Dorsolateral prefrontal cortex (tissue), 120 donors: ENCODE measurements at regions of chr4 and their contacts with region 1.

Region 1: DNA sequence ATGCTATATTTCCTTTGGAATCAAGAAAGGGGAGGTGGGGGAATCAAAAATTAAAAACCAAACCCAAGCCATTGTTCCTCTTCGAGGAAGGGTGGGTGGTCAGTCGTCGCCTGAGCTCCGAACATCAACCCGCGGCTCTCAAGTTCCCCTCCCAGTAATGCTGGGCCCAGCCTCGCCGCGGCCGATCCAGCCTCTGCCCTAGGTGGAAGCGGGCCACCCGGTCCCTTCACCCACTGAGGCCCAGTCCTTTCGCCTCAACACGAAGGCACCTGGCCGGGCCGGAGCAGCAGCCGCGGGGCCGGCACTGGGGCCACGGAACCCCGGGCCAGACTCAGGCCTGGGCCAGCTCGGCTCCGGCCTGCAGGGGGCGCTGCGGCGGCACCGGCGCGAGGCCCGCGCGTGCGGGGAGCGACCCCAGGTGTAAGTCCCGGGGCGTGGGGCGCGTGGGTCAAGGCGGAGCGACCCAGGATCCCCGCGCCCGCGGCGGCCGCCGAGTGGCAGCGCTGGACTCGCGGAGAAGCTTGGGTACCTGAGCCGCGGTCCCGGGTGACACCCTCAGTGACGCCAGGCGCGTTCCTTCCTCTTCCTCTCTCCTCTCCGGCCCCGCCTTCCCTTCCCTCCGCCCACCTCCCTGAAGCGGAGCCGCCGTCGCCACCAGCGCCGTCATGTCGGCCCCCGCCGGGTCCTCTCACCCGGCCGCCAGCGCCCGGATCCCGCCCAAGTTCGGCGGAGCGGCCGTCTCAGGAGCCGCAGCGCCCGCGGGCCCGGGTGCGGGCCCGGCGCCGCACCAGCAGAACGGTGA is at the start of gene SEC24B:
- DNase-seq: peak; percentile 63 to 92 (median 84)
- H3K4me3 ChIP-seq: peak within 1 kb of the TSS; percentile 62 to 97 (median 81)
- H3K27ac ChIP-seq: peak within 1 kb of the TSS; percentile 64 to 97 (median 90)
- H3K27me3 ChIP-seq: no peaks in the 10 kb centered on the region
- CTCF ChIP-seq: peak; percentile 43 to 98 (median 86)
- total RNA-seq, gene SEC24B: 24.1 to 47.5 (median 33.2) TPM

Region 2: DNA sequence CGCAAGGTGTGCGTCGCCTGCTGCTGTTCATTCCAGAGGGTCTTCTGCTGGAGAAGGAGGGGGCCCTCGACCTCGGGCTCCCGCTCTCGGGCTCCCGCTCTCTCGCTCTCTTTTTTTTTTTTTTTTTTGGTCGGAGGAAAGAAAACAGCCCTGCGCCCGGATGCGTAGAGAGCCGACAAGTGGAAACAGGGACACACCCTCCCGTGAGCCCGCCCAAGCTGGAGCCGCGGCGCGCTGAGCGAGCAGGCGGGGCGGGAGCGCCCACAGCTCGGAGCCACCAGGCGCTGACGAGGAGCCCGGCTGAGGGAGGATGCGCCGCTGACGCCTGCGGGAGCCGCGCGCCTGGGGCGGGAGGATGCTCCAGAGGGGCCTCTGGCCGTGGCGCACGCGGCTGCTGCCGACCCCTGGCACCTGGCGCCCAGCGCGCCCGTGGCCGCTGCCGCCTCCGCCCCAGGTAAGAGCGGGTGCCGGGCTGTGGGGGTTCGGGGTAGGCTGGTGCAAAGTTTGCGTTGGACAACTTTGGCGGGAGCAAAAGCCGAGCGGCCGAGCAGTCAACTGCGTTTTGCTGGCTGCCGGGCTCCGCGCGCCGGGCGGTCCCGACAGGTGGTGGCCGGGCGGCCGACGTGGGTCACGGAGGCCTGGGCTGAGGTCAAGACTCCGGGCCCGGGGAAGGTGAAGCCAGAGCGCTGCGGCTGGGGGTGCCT is 126.7 kb after region 1 on chr4 and contains the start of gene MCUB:
- intact Hi-C with region 1: loop called (anchors 2 to 10 kb)
- DNase-seq: peak; percentile 30 to 86 (median 64)
- H3K4me3 ChIP-seq: peak within 1 kb of the TSS; percentile 53 to 89 (median 77)
- H3K27ac ChIP-seq: peak within 1 kb of the TSS in 34 of 59 donors; percentile 12 to 79 (median 44)
- H3K27me3 ChIP-seq: no peaks in the 10 kb centered on the region
- CTCF ChIP-seq: peak in 4 of 56 donors; percentile 4 to 17 (median 8)
- total RNA-seq, gene MCUB: 1.3 to 14.3 (median 4.8) TPM

Region 3: GRCh38 chr4:109665783-109666485 is 232.5 kb after region 1 on chr4:
- intact Hi-C with region 1: loop called in 1 of 2 experiments (anchors 10 kb)
- DNase-seq: no peak
- H3K4me3 ChIP-seq: no peak overlapping the region
- H3K27ac ChIP-seq: no peak overlapping the region
- H3K27me3 ChIP-seq: no peaks in the 10 kb centered on the region
- CTCF ChIP-seq: no peak

Region 4: GRCh38 chr4:109729718-109730618 is 296.6 kb after region 1 on chr4 and contains the start of gene PLA2G12A:
- intact Hi-C with region 1: loop called in 1 of 2 experiments (anchors 10 kb)
- DNase-seq: peak; percentile 39 to 80 (median 56)
- H3K4me3 ChIP-seq: peak within 1 kb of the TSS; percentile 54 to 99 (median 91)
- H3K27ac ChIP-seq: peak within 1 kb of the TSS in 52 of 59 donors; percentile 5 to 88 (median 72)
- H3K27me3 ChIP-seq: no peaks in the 10 kb centered on the region
- CTCF ChIP-seq: peak in 3 of 56 donors; percentile 5 to 17 (median 5)
- total RNA-seq, gene PLA2G12A: 30.2 to 64.0 (median 40.2) TPM

Region 5: DNA sequence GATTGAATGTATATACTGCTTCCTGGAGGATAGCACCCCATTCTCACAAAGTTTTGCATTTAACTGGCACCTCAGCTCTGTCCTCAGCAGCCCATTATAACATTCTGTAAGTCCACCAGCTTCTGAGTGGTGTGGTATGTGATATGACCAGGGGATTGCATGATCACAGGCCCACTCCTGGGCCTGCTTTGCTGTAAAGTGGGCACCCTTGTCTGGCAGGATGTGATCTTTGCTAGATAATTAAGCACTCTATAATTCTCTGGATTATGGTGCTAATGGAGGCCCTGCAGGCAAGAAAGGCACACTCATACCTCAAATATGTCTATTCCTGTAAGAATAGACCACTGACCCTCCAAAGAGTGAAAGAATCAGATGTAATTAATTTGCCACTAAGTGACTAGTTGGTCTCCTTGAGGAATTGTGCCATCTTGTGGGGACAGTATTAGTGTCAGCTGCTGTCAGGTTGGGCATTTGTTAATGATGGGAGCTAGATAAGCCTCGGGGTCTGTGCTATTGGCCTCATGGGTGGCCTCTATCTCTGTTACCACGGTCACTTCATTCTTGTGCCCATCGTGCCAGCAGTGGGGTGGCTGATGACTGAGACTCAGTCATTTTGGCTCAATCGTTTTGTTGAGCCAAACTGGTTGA is 370.6 kb after region 1 on chr4:
- intact Hi-C with region 1: loop called in 1 of 2 experiments (anchors 5 kb)
- DNase-seq: peak in 1 of 10 donors; percentile 17
- H3K4me3 ChIP-seq: no peak overlapping the region
- H3K27ac ChIP-seq: no peak overlapping the region
- H3K27me3 ChIP-seq: peaks cover 0 to 4% (median 0%) of the 10 kb centered on the region in 45 donors
- CTCF ChIP-seq: peak in 50 of 56 donors; percentile 16 to 65 (median 39)

Region 6: DNA sequence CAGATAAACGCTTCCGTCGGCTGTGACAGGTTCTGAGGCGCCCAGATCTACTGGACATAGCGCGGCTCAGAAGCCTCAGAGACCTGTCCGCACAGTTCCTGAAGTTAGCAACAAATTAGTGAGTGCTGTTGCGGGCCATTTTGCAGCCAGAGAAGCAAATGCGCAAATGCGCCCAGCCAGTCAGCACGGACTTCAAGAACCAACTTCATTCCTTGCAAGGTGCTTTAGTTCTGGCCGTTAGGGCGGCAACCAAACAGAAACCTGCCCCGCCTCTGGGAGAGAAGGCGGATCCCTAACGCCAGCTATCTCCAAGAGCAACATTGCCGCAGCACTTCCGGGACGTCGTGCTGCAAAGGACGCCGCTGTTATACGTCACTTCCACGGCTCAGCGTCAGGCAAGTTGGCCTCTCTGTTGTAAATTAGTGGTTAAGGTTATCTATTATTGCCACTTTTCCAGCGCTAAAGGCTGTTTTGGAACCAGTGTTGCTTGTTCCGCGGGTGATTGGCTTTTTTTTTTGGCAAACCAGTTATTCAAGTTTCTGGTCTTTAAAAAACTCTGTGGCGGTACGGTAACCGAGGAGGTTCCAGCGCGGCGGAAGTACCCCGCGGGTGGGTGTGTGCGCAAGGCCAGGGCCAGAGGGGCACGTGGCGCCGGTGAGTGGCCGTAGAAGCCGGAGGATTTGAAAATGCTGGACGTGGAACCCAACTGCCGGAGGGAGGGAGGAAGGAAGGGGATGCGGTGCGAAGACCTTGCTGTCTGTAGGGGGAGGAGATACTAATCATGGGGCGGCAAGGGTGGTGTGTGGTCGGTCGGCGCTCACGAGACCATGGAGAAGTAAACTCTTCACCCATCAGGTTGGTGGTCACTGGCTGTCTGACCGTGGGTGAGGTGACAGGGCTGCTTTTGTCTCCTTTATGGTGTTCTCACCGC is 382.0 kb after region 1 on chr4 and contains the start of gene GAR1:
- intact Hi-C with region 1: loop called (anchors 5 kb)
- DNase-seq: peak; percentile 74 to 93 (median 91)
- H3K4me3 ChIP-seq: peak within 1 kb of the TSS; percentile 54 to 98 (median 86)
- H3K27ac ChIP-seq: peak within 1 kb of the TSS in 53 of 59 donors; percentile 8 to 90 (median 74)
- H3K27me3 ChIP-seq: no peaks in the 10 kb centered on the region
- CTCF ChIP-seq: peak in 32 of 56 donors; percentile 5 to 43 (median 21)
- total RNA-seq, gene GAR1: 5.6 to 15.2 (median 9.3) TPM

Region 7: DNA sequence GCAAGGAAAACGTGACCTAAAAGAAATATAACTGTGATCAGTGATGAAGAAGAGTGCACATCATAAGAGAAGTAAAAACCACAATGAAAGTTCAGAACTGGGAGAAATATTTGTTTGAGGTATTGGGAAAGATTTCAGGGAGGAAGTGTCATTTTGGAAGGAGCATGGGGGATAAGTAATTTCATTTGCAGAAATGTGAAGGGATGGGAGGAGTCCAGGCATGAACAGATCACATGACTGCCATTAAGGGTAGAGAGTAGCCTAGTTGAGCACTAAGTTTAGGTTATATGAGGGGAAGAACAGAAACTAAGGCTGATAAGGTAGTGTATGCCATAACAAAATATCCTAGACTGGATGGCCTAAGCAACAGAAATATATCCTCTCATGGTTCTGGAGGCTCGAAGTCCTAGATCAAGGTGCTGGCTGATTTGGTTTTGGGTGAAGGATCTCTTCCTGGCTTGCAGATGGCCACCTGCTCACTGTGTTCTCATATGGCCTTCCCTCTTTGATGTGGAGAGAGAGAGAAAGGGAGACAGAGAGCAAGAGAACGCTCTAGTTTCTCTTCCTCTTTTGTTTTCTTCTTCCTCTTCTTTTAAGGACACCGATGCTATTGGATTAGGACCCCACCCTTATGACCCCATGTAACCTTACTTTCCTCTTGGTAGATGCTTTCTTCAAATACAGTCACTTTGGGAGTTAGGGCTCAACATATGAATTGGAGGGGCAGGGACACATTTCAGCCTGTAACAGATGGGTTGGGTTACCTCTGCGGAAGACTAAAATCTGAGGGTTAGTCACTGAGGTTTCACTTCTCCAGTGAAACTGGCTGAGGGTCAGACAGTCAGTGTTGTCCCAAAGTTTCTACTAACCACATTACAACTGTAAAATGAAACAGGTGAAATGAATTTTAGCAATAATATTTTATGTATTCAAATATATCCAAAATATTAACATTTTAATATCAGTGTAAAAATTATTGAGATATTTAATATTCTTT is 557.2 kb after region 1 on chr4:
- intact Hi-C with region 1: loop called in 1 of 2 experiments (anchors 5 kb)
- DNase-seq: no peak
- H3K4me3 ChIP-seq: no peak overlapping the region
- H3K27ac ChIP-seq: no peak overlapping the region
- H3K27me3 ChIP-seq: peaks cover 0 to 10% (median 0%) of the 10 kb centered on the region in 45 donors
- CTCF ChIP-seq: no peak